ENCODE measurements at regions of chr18 and their contacts with region 1.

Region 1: DNA sequence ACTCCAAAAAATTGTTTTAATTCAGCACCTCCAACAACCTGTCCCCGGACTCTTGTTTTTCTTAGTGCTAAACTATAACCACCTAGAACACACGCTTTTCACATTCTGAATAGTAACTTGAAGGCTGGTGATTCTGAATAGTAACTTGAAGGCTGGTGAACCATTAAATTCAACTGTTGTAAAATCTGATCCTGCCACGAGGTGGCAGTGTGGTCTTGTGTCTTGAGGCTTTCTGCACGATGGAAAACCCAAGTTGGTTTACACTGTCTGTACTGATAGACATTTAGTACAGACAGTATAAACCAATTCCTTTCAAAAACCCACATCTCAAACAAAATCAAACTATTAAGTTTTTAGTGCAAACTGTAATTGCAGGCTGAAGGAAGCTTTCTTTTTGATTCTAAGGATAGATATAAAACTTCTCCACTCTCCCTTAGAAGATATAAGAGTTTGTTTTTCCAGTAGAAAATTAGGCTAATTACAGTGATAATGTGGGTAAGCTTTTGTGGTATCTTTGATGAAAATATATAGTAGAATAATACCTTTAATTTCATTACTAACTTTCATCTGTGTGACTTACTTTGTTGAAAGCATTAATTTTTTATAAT is 57.6 kb downstream of the VAPA start:
- DNase-seq: peak; percentile 82
- H3K4me3 Mint-ChIP-seq: no peak overlapping the region
- H3K27ac Mint-ChIP-seq: no peak overlapping the region
- H3K4me1 Mint-ChIP-seq: no peaks in the 10 kb centered on the region
- H3K27me3 Mint-ChIP-seq: no peaks in the 10 kb centered on the region
- CTCF ChIP-seq: peak; percentile 65

Region 2: DNA sequence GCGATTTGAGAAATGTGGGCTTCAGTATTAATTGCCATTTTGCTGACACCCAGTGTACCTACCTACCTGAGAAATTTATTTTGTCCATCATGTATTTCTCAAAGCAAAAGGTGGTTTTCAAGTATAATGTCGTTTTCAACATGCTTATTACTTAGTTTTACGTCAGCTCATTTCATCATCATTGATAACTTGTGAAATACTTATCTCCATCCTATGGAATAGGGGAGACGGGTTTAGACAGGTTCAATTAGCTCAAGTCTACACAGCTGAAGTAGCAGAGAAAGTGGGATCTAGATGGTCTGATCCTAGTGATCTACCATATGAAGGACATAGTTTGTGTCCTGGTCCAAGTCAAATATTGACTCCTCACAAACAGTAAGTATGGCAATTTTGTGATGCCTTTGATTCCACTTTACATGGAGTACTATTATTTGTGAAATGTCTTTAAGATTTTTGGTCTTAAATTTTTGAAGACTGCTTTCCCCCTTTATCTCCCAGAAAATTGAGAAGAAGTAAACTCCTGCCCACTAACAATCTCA is 12.5 kb before region 1 on chr18:
- CTCF ChIA-PET with region 1: interaction called, 25 read pairs
- POLR2A ChIA-PET with region 1: interaction called, 3 read pairs
- intact Hi-C with region 1: no loop called
- DNase-seq: no peak
- H3K4me3 Mint-ChIP-seq: no peak overlapping the region
- H3K27ac Mint-ChIP-seq: no peak overlapping the region
- H3K4me1 Mint-ChIP-seq: no peaks in the 10 kb centered on the region
- H3K27me3 Mint-ChIP-seq: no peaks in the 10 kb centered on the region
- CTCF ChIP-seq: no peak

Region 3: DNA sequence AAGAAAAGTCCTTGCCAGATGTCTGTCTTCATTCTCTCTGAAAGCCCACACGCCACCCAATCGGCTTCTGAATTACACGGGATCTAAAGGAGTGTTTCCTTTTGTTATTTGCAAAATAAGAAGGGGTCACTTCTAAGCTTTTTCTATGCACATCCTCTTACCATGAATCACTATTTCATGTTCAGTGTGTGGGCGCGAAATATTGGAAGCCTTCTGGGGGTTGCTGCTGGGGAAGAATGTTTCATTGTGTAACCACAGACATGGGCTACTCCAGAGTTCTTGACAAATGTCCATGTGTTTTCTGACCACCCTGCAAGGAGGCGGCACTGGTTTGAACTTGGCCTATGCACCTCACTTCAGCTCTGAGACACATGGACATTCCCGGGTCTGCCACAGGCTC is 349.4 kb after region 1 on chr18:
- CTCF ChIA-PET with region 1: no interaction called
- POLR2A ChIA-PET with region 1: no interaction called
- intact Hi-C with region 1: loop called (anchors 1 kb)
- DNase-seq: peak; percentile 13
- H3K4me3 Mint-ChIP-seq: no peak overlapping the region
- H3K27ac Mint-ChIP-seq: no peak overlapping the region
- H3K4me1 Mint-ChIP-seq: peaks cover 18% of the 10 kb centered on the region
- H3K27me3 Mint-ChIP-seq: no peaks in the 10 kb centered on the region
- CTCF ChIP-seq: no peak

Region 4: GRCh38 chr18:10353791-10354190 is 382.4 kb after region 1 on chr18:
- CTCF ChIA-PET with region 1: no interaction called
- POLR2A ChIA-PET with region 1: no interaction called
- intact Hi-C with region 1: no loop called
- DNase-seq: peak; percentile 25
- H3K4me3 Mint-ChIP-seq: no peak overlapping the region
- H3K27ac Mint-ChIP-seq: no peak overlapping the region
- H3K4me1 Mint-ChIP-seq: peaks cover 8% of the 10 kb centered on the region
- H3K27me3 Mint-ChIP-seq: no peaks in the 10 kb centered on the region
- CTCF ChIP-seq: no peak

Region 5: DNA sequence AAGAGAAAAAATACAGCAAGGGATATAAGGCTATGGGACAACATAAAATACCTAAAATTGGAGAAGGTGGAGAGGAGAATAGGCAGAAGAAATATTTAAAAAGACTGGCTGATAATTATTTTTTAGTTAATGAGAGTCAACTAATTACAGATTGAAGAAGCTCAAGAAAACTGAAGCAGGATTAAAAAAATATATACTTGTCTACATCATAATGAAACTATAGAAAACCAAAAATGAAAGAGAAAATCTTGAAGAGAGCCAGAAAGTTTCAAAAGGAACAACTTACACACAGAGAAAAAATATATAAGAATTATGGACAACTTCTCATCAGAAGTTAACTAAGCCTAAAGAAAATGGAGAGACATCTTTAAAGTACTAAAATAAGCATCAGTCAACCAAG is 420.1 kb after region 1 on chr18:
- CTCF ChIA-PET with region 1: no interaction called
- POLR2A ChIA-PET with region 1: no interaction called
- intact Hi-C with region 1: no loop called
- DNase-seq: no peak
- H3K4me3 Mint-ChIP-seq: no peak overlapping the region
- H3K27ac Mint-ChIP-seq: no peak overlapping the region
- H3K4me1 Mint-ChIP-seq: no peaks in the 10 kb centered on the region
- H3K27me3 Mint-ChIP-seq: no peaks in the 10 kb centered on the region
- CTCF ChIP-seq: no peak

Region 6: GRCh38 chr18:10442551-10442971 is 471.1 kb after region 1 on chr18:
- CTCF ChIA-PET with region 1: interaction called, 11 read pairs
- POLR2A ChIA-PET with region 1: no interaction called
- intact Hi-C with region 1: no loop called
- DNase-seq: no peak
- H3K4me3 Mint-ChIP-seq: no peak overlapping the region
- H3K27ac Mint-ChIP-seq: no peak overlapping the region
- H3K4me1 Mint-ChIP-seq: no peaks in the 10 kb centered on the region
- H3K27me3 Mint-ChIP-seq: no peaks in the 10 kb centered on the region
- CTCF ChIP-seq: no peak

Region 7: GRCh38 chr18:10519999-10520935 is 548.9 kb after region 1 on chr18:
- CTCF ChIA-PET with region 1: interaction called, 167 read pairs
- POLR2A ChIA-PET with region 1: interaction called, 38 read pairs
- intact Hi-C with region 1: loop called (anchors 1 kb)
- DNase-seq: peak; percentile 90
- H3K4me3 Mint-ChIP-seq: no peak overlapping the region
- H3K27ac Mint-ChIP-seq: no peak overlapping the region
- H3K4me1 Mint-ChIP-seq: no peaks in the 10 kb centered on the region
- H3K27me3 Mint-ChIP-seq: no peaks in the 10 kb centered on the region
- CTCF ChIP-seq: peak; percentile 83

Region 8: DNA sequence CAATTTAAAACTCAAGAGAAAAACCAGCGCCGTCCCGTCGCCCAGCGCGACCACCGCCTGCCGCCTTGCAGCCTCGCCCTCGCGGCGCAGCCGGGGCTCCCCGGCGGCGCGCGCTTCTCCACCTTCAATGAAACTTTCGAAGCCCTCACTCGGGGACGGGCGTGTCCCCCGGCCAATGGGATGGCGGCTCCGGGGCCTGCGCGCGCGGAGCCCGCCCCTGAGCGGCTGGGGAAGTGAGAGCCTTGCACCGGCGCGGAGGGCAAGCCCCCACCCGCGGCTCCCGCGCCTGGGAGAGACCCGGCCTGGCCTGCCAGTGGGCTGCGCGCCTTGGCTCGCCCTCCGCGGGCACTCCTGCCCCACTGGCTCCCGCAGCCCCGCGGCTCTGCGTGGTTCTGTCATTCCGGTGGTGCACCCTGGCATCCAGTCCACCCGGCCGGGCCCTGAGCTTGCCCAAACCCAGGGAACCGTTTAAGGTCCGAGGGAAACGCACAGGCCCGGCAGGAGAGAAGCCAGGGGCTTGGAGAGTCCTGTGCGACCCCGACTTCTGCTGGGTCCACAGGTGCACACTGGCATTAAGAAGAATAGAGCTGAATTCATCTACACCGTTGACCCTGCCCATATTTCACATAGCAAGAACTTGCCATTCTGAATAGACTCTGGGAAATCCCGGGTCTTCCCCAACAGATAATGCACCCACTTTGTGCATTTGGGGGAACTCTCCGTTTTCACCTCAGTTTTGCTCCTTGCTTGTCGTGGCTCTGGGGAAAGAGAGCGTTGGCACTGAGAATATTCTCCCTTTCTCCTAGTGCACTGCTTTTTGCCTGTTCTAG is 1178.2 kb after region 1 on chr18 and contains the start of gene PIEZO2:
- CTCF ChIA-PET with region 1: interaction called, 4 read pairs
- POLR2A ChIA-PET with region 1: no interaction called
- intact Hi-C with region 1: loop called (anchors 2 kb)
- DNase-seq: no peak
- H3K4me3 Mint-ChIP-seq: no peak within 1 kb of the TSS
- H3K27ac Mint-ChIP-seq: no peak within 1 kb of the TSS
- H3K4me1 Mint-ChIP-seq: no peaks in the 10 kb centered on the region
- H3K27me3 Mint-ChIP-seq: peaks cover 54% of the 10 kb centered on the region
- CTCF ChIP-seq: no peak
- total RNA-seq, gene PIEZO2: 0.49 and 0.93 TPM in 2 replicates